K562 (cell line): ENCODE measurements at regions of chr19 and their contacts with region 1.

Region 1: GRCh38 chr19:7197760-7198696 is 96.2 kb downstream of the INSR start:
- DNase-seq: peak; percentile 90 to 98 (median 97)
- ATAC-seq: peak; percentile 98
- H3K4me3 ChIP-seq: peak overlapping the region; percentile 40
- H3K27ac ChIP-seq: peak overlapping the region; percentile 52; the same call in 2 of the 3 replicates
- H3K4me1 ChIP-seq: peaks cover 2 to 19% of the 10 kb centered on the region in 2 experiments; a peak in 4 of 5 replicates
- H3K27me3 ChIP-seq: peaks cover under 1 to 12% of the 10 kb centered on the region in 2 experiments; a peak in 4 of 5 replicates
- CTCF ChIP-seq: no peak
- EP300 ChIP-seq: no peak; the same call in 1 of the 2 replicates
- POLR2A ChIP-seq: no peak
- RAD21 ChIP-seq: no peak

Region 2: DNA sequence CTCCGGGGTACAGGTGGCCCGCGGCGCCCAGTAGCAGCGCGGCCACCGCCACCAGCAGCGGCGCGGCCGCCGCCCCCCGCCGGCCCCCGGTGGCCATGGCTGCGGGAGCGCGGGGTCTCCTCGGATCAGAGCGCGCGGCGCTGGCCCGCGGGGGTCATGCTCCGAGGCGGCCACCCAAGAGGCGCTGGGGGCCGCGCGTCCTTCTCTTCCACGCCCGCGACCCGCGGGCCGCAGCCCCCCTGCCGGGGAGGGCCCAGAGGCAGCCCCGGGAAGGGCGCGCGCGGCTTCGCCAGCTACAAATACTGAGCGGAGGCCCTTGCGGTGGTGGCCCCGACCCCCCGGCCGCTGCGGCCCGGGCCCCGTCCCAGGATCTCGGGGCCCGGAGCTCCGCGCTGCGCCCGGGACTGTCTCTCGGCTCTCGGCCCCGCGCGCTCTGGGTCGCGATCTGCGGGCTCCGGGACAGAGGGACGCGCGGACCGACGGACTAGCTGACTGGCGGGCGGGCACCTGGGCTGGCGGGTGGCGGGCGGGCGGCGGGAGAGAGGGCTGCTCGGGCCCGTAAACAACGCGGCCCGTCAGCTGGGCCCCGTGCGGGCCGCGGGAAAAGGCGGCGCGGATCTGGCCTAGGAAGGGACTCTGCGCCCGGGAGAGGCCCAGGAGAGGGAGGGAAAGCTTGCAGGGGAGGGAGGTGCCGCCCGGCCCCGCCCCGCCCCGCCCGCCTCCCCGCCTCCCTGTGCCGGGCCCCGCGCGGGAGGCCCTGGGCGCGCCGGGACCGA is 96.0 kb after region 1 on chr19 and contains the start of gene INSR:
- CTCF ChIA-PET with region 1: no interaction called
- POLR2A ChIA-PET with region 1: no interaction called
- in situ Hi-C with region 1: no loop called
- intact Hi-C with region 1: loop called (anchors 2 kb)
- DNase-seq: peak; percentile 85 to 98 (median 96)
- ATAC-seq: peak; percentile 97
- H3K4me3 ChIP-seq: peak within 1 kb of the TSS; percentile 49
- H3K27ac ChIP-seq: no peak within 1 kb of the TSS
- H3K4me1 ChIP-seq: peaks cover 0 to 17% of the 10 kb centered on the region in 2 experiments; a peak in 2 of 5 replicates
- H3K27me3 ChIP-seq: peaks cover 5 to 22% of the 10 kb centered on the region in 2 experiments; a peak in 3 of 5 replicates
- CTCF ChIP-seq: no peak
- EP300 ChIP-seq: no peak
- POLR2A ChIP-seq: no peak
- RAD21 ChIP-seq: no peak
- polyA plus RNA-seq, gene INSR: 0.04 to 0.07 TPM